Activated naive CD8-positive, alpha-beta T cell treated with anti-CD3 and anti-CD28 coated beads, Interleukin-2, amount 10 ng/mL, durations not matched to agents 7 days and 5 days (primary cell): ENCODE measurements at regions of chr3 and their contacts with region 1.

Region 1: GRCh38 chr3:9809615-9810432 is at the start of gene TTLL3:
- DNase-seq: peak; percentile 73
- ATAC-seq: peak; percentile 71
- H3K4me3 Mint-ChIP-seq: peak within 1 kb of the TSS; percentile 88
- H3K27ac Mint-ChIP-seq: peak within 1 kb of the TSS; percentile 93
- H3K4me1 Mint-ChIP-seq: peaks cover 34% of the 10 kb centered on the region
- H3K27me3 Mint-ChIP-seq: no peaks in the 10 kb centered on the region
- total RNA-seq, gene TTLL3: 84.0 to 85.7 TPM

Region 2: GRCh38 chr3:9769426-9770275 is 40.2 kb before region 1 on chr3 and contains the start of gene CAMK1:
- POLR2A ChIA-PET with region 1: interaction called, 13 read pairs
- DNase-seq: peak; percentile 81
- ATAC-seq: peak; percentile 96
- H3K4me3 Mint-ChIP-seq: peak within 1 kb of the TSS; percentile 77
- H3K27ac Mint-ChIP-seq: peak within 1 kb of the TSS; percentile 67
- H3K4me1 Mint-ChIP-seq: peaks cover 33% of the 10 kb centered on the region
- H3K27me3 Mint-ChIP-seq: no peaks in the 10 kb centered on the region
- total RNA-seq, gene CAMK1: 25.2 to 26.9 TPM

Region 3: GRCh38 chr3:9862391-9863057 is 52.7 kb after region 1 on chr3:
- POLR2A ChIA-PET with region 1: no interaction called
- DNase-seq: peak; percentile 57
- ATAC-seq: peak; percentile 80
- H3K4me3 Mint-ChIP-seq: peak overlapping the region; percentile 25
- H3K27ac Mint-ChIP-seq: no peak overlapping the region
- H3K4me1 Mint-ChIP-seq: peaks cover 1% of the 10 kb centered on the region
- H3K27me3 Mint-ChIP-seq: peaks cover 21% of the 10 kb centered on the region